Caki2 (cell line): ENCODE measurements at regions of chr13 and their contacts with region 1.

Region 1: DNA sequence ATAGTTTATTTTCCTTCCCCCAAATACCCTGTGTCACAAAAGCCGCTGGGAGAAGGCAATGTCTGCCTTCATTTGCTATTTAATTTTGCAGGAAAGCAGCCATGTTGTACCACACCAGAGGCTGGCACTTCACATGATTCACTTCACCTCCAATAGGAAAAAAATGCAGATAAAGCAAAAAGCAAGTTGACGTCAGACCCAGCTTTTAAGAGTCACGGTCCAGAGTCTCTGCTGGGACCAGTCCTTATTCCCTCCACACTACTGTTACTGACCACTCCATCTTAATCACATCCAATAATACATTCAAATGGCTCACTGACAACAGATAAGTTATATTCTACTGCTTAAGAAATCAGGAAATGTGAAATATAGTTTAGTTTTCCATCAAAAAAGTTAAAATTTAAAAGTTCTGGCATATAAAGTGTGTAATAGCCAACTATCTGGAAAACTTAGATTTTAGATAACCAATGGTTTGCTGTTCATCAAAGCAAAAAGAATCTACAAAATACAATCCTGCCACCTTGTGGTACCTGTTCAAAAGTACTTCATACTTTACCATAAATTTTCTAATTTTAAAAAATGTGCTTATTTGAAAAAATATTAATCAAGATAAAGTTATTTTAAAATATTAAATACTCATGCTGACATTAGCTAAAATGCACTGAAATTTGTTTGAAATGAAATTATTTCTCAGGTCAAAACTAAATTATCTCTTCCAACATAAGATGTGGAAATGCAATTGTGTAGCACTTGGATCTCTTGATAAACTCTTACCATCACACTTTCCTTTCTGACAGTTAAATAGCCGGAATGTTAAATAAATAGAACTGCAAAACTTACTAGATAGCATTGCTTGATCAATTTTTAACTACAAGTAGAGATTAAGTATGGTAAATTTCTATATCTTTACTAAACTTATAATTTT is 97.3 kb downstream of the SERP2 start:
- DNase-seq: peak; percentile 84

Region 2: GRCh38 chr13:43905435-43906031 is 565.4 kb before region 1 on chr13:
- in situ Hi-C with region 1: loop called (anchors 25 kb)
- DNase-seq: peak; percentile 46

Region 3: GRCh38 chr13:44191504-44192171 is 279.3 kb before region 1 on chr13:
- in situ Hi-C with region 1: no loop called
- DNase-seq: no peak

Region 4: GRCh38 chr13:44410346-44410859 is 60.5 kb before region 1 on chr13:
- in situ Hi-C with region 1: no loop called
- DNase-seq: no peak